ENCODE measurements at regions of chr11 and their contacts with region 1.

Region 1: DNA sequence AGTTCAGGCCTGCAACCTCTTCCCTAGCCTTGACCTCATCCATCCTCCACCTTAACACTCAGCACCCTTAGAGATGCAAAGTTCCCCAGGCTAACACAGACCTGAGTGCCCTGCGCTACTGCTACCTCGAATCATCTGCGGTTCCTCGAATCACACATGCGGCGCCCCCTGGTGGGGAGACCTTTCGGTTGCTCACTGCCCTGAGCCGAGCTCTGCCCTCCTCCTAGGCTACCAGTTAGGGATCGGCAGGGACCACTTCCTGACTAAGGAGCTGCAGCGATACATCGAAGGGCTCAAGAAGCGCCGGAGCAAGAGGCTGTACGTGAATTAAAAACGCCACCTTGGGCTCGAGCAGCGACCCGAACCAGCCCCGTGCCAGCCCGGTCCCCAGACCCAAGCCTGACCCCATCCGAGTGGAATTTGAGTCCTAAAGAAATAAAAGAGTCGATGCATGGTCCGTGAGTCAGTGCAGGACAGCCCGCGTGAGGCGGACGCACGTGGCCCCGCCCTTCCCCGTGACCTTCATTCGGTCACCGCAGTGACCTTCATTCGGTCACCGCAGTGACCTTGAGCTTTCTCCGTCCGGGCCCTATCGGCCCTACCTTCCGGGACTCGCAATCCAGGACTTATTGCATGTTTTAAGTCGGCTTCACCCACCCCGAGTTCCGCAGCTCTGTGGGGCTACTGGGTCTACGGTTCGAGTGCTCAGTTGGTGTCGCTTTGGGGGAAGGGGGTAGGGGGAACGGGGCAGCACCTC is 830 bp upstream of the ESRRA start:
- DNase-seq: peak; percentile 97
- ATAC-seq: peak; percentile 40
- H3K4me3 Mint-ChIP-seq: peak overlapping the region; percentile 86
- H3K27ac Mint-ChIP-seq: peak overlapping the region; percentile 98
- H3K4me1 Mint-ChIP-seq: peaks cover 43% of the 10 kb centered on the region
- H3K27me3 Mint-ChIP-seq: peaks cover 21% of the 10 kb centered on the region

Region 2: DNA sequence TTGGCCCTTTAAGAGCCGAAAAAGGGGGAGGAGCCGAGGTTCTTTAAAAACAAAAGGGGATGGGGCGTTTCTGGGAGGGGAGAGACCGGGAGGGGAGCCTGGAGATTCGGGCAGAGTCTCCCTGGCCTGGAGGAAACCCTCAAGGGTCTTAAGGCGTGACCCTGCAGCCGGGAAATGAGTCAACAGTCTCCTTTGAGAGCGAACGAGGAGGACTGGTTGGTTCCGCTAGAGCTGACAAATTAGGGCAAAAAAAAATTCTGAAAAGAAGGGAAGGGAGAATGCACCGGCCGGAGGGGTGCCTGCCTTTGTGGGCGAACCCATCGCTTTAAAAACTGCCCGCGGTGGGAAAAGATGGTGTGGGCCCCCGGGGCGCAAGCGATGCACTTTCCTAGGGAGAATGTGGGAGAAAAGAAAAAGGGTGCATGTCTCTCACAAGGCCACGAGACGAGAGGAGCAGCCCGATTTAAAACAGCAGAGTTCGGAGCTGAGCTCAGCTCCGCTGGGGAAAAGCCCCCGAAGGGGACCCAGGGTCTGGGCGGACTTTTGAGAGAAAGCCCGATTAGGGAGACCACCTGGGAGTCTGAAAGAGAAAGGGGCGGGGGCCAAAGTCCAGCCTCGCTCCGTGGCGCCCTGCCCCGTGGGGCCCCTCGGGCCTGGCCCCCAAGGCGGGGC is 536.8 kb before region 1 on chr11:
- CTCF ChIA-PET with region 1: no interaction called
- DNase-seq: peak; percentile 61
- ATAC-seq: peak; percentile 31
- H3K4me3 Mint-ChIP-seq: peak overlapping the region; percentile 87
- H3K27ac Mint-ChIP-seq: peak overlapping the region; percentile 70
- H3K4me1 Mint-ChIP-seq: peaks cover 15% of the 10 kb centered on the region
- H3K27me3 Mint-ChIP-seq: peaks cover 24% of the 10 kb centered on the region

Region 3: GRCh38 chr11:64088162-64089026 is 216.1 kb before region 1 on chr11:
- CTCF ChIA-PET with region 1: no interaction called
- DNase-seq: no peak
- ATAC-seq: no peak
- H3K4me3 Mint-ChIP-seq: no peak overlapping the region
- H3K27ac Mint-ChIP-seq: no peak overlapping the region
- H3K4me1 Mint-ChIP-seq: peaks cover 6% of the 10 kb centered on the region
- H3K27me3 Mint-ChIP-seq: no peaks in the 10 kb centered on the region

Region 4: DNA sequence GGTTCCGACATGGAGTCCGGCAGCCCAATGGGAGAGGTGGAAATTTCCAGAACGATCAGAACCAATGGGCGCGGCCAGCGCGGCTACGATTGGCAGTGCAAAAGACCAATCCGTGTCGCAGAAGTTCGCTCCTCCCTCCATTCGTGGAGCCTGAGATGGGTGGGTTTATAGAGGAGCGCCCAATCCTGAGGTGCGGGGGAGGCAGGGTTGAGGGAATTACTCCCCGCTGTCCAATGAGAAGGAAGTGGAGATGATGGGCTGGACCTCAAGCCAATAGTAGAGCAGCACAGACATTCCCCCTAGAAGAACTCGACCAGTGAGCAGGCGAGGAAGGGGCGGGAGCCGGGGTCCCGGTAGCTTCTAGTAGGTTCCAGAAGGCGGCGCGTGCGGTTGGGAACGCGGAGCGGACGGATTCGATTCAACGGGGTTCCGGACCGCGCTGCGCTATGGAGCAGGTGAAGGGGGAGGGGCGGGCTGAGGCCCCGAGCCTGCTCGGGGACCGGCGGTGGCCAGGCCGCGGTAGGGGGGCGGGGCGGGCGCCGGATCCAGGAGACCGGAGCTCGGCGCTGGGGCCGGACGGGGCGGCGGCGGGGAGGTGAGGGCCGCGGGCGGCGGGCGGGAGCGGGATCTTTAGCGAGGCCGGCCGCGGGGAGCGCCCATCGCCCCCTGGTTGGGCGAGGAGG is 118.5 kb before region 1 on chr11 and contains the start of gene STIP1:
- CTCF ChIA-PET with region 1: interaction called, 13 read pairs
- DNase-seq: peak; percentile 100
- ATAC-seq: peak; percentile 93
- H3K4me3 Mint-ChIP-seq: no peak within 1 kb of the TSS
- H3K27ac Mint-ChIP-seq: peak within 1 kb of the TSS; percentile 96
- H3K4me1 Mint-ChIP-seq: peaks cover 52% of the 10 kb centered on the region
- H3K27me3 Mint-ChIP-seq: no peaks in the 10 kb centered on the region
- total RNA-seq, gene STIP1: 303 to 410 TPM

Region 5: DNA sequence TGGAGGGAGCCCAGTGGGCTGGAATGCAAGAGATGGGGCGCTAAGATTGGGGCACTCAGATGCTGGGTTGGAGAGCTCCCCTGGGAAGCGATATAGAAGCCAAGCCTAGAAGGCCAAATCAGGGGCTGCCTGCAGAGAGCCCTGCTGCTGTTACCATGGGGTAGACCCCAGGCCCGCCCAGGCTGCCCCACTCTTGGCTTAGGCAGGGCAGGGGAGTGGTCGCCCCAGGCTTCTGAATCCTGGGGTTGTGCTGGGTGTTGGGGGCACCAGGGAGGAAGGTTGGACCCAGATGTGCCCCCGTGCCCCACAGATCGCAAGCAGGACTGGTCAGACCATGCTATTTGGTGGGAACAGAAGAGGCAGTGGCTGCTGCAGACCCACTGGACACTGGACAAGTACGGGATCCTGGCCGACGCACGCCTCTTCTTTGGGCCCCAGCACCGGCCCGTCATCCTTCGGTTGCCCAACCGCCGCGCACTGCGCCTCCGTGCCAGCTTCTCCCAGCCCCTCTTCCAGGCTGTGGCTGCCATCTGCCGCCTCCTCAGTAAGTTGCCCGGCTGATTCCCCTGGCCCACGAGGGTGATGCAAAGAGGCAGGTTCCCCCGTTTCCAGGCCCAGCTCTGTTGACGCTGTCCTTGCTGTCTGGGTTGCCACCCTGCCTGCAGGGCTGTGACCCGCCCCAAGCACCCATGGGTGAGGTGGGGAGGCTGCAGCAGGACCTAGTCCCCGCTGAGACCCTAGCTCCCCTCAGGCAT is 94.0 kb before region 1 on chr11:
- CTCF ChIA-PET with region 1: interaction called, 169 read pairs
- DNase-seq: no peak
- ATAC-seq: no peak
- H3K4me3 Mint-ChIP-seq: no peak overlapping the region
- H3K27ac Mint-ChIP-seq: peak overlapping the region; percentile 41
- H3K4me1 Mint-ChIP-seq: peaks cover 31% of the 10 kb centered on the region
- H3K27me3 Mint-ChIP-seq: no peaks in the 10 kb centered on the region

Region 6: GRCh38 chr11:64240394-64241174 is 63.9 kb before region 1 on chr11 and contains the start of gene FKBP2:
- CTCF ChIA-PET with region 1: interaction called, 146 read pairs
- DNase-seq: peak; percentile 98
- ATAC-seq: peak; percentile 75
- H3K4me3 Mint-ChIP-seq: peak within 1 kb of the TSS; percentile 83
- H3K27ac Mint-ChIP-seq: peak within 1 kb of the TSS; percentile 95
- H3K4me1 Mint-ChIP-seq: peaks cover 47% of the 10 kb centered on the region
- H3K27me3 Mint-ChIP-seq: no peaks in the 10 kb centered on the region
- total RNA-seq, gene FKBP2: 23.4 to 23.9 TPM

Region 7: DNA sequence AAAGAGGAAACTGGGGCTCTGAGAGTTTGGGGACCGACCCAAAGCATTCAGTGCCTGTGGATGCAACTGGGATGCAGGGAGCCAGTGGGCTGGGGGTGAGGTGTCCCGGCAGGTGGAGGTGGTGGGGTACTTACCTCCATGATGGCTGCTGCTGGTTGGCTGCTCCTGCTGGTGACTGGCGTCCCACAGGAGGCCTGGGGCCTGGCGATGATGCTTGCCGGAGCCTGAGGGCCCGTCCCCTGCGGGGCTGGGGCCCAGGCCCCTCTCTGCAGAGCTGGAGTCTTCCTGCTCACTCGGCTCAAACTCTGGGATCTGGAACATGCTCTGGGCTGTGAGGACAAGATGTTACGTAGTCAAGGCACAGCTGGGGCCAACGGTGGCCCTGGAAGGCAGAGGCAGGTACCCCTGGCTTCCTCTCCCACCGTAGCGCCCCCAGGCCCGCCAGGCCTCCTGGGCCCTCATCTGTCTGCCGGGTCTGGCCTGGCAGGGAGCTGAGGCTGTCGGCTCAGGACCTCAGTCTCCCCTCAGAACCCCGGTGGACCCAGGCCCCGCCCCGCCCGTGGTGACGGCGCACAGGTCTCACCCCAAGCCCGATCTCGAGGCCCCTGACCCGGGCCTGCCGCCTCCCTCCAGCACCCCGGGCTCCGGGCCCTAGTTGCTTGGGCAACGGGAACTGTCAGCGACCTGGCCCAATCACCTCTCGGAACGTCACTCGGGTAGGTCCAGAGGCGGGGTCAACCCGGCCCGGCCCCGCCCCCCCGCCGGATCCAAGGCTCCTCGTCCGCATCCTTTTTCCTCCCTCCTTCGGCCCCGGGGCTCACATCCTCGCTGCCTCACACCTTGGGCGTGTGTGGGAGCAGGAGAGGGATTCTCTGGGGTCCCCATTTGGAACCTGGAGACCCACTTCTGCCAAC is 20.2 kb before region 1 on chr11 and contains the start of gene BAD:
- CTCF ChIA-PET with region 1: interaction called, 188 read pairs
- DNase-seq: peak; percentile 96
- ATAC-seq: peak; percentile 85
- H3K4me3 Mint-ChIP-seq: peak within 1 kb of the TSS; percentile 79
- H3K27ac Mint-ChIP-seq: peak within 1 kb of the TSS; percentile 89
- H3K4me1 Mint-ChIP-seq: peaks cover 18% of the 10 kb centered on the region
- H3K27me3 Mint-ChIP-seq: no peaks in the 10 kb centered on the region
- total RNA-seq, gene BAD: 35.6 to 36.1 TPM

Region 8: DNA sequence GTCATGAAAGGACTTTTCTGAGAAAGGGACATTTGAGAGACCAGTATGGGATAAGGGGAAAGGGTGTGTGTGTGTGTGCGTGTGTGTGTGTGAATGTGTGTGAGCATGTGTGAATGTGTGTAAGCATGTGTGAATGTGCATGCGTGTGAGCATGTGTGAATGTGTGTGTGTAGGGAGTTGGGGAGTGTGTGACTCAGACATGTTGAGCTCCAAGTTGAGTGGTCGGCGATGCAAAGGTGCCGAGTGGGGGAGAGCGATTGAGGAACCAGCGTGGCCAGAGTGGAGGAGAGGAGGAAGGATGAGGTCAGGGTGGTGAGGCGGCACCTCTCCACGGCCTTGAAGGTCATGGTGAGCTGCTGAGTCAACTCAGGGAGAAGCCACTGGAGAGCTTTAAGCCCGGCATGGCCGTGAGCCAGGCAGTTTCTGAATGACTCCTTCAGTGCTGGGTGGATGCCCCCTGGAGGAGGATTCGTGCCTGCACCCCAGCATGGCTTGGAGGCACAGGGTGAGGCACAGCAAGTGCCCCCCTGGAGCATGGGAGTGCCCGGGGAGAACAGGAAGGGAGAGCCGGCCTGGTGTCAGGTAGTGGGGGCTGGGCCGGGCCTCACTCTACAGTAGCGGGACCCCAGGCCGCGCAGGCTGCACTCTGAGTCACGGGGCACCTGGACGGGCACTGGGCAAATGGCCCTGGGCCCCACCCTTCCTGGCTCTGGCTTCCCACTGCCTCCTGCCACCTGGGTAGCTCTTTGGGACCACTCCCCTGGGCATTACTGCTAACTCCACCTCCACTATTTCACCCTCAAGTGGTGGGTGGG is 27.3 kb after region 1 on chr11:
- CTCF ChIA-PET with region 1: interaction called, 77 read pairs
- DNase-seq: peak; percentile 96
- ATAC-seq: peak; percentile 95
- H3K4me3 Mint-ChIP-seq: peak overlapping the region; percentile 16
- H3K27ac Mint-ChIP-seq: peak overlapping the region; percentile 83
- H3K4me1 Mint-ChIP-seq: peaks cover 48% of the 10 kb centered on the region
- H3K27me3 Mint-ChIP-seq: no peaks in the 10 kb centered on the region

Region 9: GRCh38 chr11:64372802-64373597 is 68.5 kb after region 1 on chr11:
- CTCF ChIA-PET with region 1: no interaction called
- DNase-seq: no peak
- ATAC-seq: peak; percentile 23
- H3K4me3 Mint-ChIP-seq: no peak overlapping the region
- H3K27ac Mint-ChIP-seq: no peak overlapping the region
- H3K4me1 Mint-ChIP-seq: no peaks in the 10 kb centered on the region
- H3K27me3 Mint-ChIP-seq: no peaks in the 10 kb centered on the region

Region 10: DNA sequence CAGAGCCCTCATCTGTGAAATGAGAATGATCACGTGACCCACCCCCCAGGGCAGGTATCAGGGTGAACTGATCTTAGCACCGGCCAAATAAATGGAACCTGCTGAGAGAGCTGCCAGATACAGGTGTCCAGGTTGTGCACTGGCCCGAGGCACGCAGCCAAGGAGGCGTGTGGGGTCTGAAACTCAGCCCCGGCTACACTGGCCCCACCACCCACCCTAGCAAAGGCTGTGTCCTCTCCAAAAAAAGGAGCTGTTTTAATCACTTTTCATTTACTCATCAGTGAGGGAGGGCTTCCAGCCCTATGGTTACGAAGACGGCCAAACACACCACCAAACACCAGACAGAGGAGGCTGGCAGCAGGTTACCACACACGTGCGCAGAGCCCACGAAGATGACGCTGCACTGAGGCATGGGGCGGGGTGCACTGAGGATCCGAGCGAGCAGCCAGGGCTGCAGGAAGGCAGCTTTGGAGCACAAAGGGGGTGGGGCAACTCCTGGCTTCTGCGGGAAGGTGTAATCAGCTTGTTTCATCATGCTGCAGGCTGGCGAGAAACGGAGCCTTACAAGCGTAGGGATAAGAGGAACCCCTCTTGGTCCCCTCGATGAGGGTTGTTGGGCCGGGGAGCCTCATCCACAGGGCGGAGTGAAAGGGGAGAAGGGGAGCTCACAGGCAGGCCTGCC is 267.1 kb after region 1 on chr11:
- CTCF ChIA-PET with region 1: no interaction called
- DNase-seq: no peak
- ATAC-seq: no peak
- H3K4me3 Mint-ChIP-seq: no peak overlapping the region
- H3K27ac Mint-ChIP-seq: no peak overlapping the region
- H3K4me1 Mint-ChIP-seq: peaks cover 1% of the 10 kb centered on the region
- H3K27me3 Mint-ChIP-seq: peaks cover 13% of the 10 kb centered on the region

Measured in activated CD8-positive, alpha-beta memory T cell treated with anti-CD3 and anti-CD28 coated beads, Interleukin-2, amount 10 ng/mL, durations not matched to agents 7 days and 5 days (primary cell).